Heart left ventricle (tissue), 16 donors: ENCODE measurements at regions of chr13 and their contacts with region 1.

Region 1: DNA sequence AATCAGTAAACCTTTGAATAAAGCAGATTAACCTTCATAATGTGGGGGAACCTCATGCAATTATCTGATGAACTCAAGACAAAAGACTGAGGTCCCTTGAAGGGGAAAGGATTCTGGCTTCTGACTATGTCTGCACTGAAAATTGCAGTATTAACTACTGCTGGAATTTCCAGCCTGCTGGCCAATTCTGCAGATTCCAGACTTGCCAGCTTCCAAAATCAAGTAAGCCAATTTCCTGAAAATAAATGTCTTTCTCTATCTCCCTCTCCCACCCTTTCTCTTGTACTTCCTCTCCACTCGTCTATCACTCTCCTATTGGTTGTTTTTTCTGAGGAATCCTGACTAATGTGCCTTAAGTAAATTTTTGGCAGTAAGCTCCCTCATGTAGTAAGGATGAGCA is 1479.9 kb upstream of the PRR20A start:
- DNase-seq: no peak
- ATAC-seq: no peak
- H3K4me3 ChIP-seq: no peak overlapping the region
- H3K27ac ChIP-seq: no peak overlapping the region
- H3K4me1 ChIP-seq: no peaks in the 10 kb centered on the region
- H3K27me3 ChIP-seq: no peaks in the 10 kb centered on the region
- CTCF ChIP-seq: no peak
- POLR2A ChIP-seq: no peak

Region 2: GRCh38 chr13:55682776-55683175 is 21.9 kb after region 1 on chr13:
- intact Hi-C with region 1: loop called in 1 of 10 experiments (anchors 2 kb)
- DNase-seq: no peak
- ATAC-seq: no peak
- H3K4me3 ChIP-seq: no peak overlapping the region
- H3K27ac ChIP-seq: no peak overlapping the region
- H3K4me1 ChIP-seq: no peaks in the 10 kb centered on the region
- H3K27me3 ChIP-seq: no peaks in the 10 kb centered on the region
- CTCF ChIP-seq: no peak
- POLR2A ChIP-seq: no peak